Natural killer cell (primary cell): ENCODE measurements at regions of chr5 and their contacts with region 1.

Region 1: DNA sequence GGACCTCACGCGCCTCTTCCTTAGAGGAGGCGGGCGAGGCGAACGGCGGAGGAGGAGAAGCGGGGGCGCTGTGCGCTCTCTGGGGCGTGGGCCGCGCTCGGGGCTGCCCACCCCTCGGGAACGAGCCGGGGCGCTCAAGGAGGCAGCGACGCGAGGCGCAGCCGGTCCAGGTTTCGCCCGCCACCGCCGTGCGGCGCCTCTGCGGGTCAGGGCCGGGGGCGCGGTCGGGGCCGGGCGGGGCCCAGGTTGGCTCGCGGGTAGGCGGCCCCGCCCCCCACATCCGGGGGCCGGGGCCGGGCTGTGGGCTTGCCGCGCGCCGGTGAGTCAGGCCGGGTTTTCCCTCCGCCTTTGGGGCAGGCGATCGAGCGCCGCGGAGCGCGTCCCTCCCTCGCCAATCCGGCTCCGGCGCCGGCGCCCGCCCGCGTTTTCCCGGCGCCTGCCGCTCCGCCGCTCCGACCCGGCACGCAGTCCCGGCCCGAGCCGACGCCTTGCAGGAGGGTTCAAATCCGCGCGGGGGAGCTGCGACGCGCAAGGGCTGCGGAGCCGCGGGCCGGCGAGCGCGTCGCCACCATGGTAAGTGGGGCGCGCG is at the start of gene N4BP3:
- DNase-seq: peak; percentile 85 to 89
- ATAC-seq: peak; percentile 33 to 55 (median 49)
- H3K4me3 ChIP-seq: peak within 1 kb of the TSS; percentile 41
- H3K4me3 Mint-ChIP-seq: peak within 1 kb of the TSS; percentile 91
- H3K27ac ChIP-seq: peak within 1 kb of the TSS; percentile 60
- H3K27ac Mint-ChIP-seq: peak within 1 kb of the TSS; percentile 90 to 94
- H3K4me1 ChIP-seq: peaks cover 62% of the 10 kb centered on the region
- H3K4me1 Mint-ChIP-seq: peaks cover 29 to 38% of the 10 kb centered on the region in 2 donors
- H3K27me3 ChIP-seq: peaks cover 2% of the 10 kb centered on the region
- H3K27me3 Mint-ChIP-seq: peaks cover 8 to 24% of the 10 kb centered on the region in 2 donors
- CTCF ChIP-seq: no peak
- total RNA-seq, gene N4BP3: 5.6 to 16.9 (median 9.0) TPM

Region 2: DNA sequence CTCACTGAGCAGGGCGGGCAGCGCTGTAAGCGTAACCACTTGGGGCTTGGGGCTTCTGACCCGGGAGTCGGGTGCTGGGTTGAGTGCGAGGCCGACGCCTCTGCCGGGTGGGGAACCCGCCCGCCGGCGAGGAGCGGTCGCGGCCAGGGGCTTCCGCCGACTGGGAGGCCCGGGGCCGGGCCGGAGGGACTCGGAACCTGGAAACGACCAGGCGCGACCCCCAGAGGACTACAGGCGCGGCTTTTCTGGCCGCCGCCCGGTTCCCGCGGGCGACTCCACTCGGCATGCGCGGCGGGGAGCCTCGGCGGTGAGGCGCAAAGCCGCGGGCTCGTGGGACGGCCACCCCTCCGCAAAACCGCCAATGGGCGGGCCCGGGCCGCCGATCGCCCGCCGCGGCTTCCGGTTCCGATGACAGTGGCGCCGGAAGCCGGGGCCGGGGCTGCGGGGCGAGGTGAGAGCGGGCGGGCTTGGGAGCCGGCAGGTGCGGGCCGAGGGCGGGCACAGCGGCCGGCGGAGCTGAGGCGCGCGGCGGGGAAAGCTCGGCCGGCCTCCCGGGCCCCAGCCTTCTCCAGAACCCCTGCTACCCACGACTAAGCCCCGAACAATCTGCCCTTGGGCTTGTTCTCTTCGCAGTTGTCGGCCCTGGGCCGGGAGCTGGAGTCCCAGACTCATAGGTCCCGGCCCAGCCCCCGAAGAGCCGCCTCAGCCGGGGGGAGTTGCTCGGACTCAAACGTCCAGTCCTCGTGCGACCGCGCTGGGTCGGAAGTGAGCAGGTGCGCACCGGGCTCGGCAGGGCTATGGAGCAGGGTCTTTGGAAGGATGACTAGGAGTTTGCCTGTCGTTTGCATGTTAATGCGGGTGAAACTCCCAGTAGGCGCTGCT is 17.6 kb after region 1 on chr5 and contains the start of gene RMND5B:
- intact Hi-C with region 1: loop called (anchors 1 kb)
- DNase-seq: peak; percentile 80 to 87
- ATAC-seq: peak; percentile 83 to 84 (median 83)
- H3K4me3 ChIP-seq: peak within 1 kb of the TSS; percentile 72
- H3K4me3 Mint-ChIP-seq: peak within 1 kb of the TSS; percentile 72
- H3K27ac ChIP-seq: peak within 1 kb of the TSS; percentile 72
- H3K27ac Mint-ChIP-seq: peak within 1 kb of the TSS; percentile 13 to 18
- H3K4me1 ChIP-seq: peaks cover 21% of the 10 kb centered on the region
- H3K4me1 Mint-ChIP-seq: peaks cover 7 to 26% of the 10 kb centered on the region in 2 donors
- H3K27me3 ChIP-seq: no peaks in the 10 kb centered on the region
- H3K27me3 Mint-ChIP-seq: no peaks in the 10 kb centered on the region
- CTCF ChIP-seq: no peak
- total RNA-seq, gene RMND5B: 9.2 to 12.7 (median 9.5) TPM

Region 3: GRCh38 chr5:178153573-178154343 is 40.5 kb after region 1 on chr5 and contains the start of gene NHP2:
- intact Hi-C with region 1: loop called (anchors 2 kb)
- DNase-seq: peak; percentile 92 to 99
- ATAC-seq: peak; percentile 98 to 100 (median 99)
- H3K4me3 ChIP-seq: peak within 1 kb of the TSS; percentile 54
- H3K4me3 Mint-ChIP-seq: peak within 1 kb of the TSS; percentile 98
- H3K27ac ChIP-seq: peak within 1 kb of the TSS; percentile 11
- H3K27ac Mint-ChIP-seq: peak within 1 kb of the TSS; percentile 89 to 93
- H3K4me1 ChIP-seq: peaks cover 20% of the 10 kb centered on the region
- H3K4me1 Mint-ChIP-seq: peaks cover 19 to 23% of the 10 kb centered on the region in 2 donors
- H3K27me3 ChIP-seq: no peaks in the 10 kb centered on the region
- H3K27me3 Mint-ChIP-seq: no peaks in the 10 kb centered on the region
- CTCF ChIP-seq: no peak
- total RNA-seq, gene NHP2: 39.2 to 43.5 (median 40.2) TPM

Region 4: GRCh38 chr5:178232124-178232919 is 119.0 kb after region 1 on chr5 and contains the start of gene PHYKPL:
- intact Hi-C with region 1: loop called (anchors 10 kb)
- DNase-seq: peak; percentile 54 to 81
- ATAC-seq: peak; percentile 67 to 79 (median 70)
- H3K4me3 ChIP-seq: peak within 1 kb of the TSS; percentile 70
- H3K4me3 Mint-ChIP-seq: peak within 1 kb of the TSS; percentile 87
- H3K27ac ChIP-seq: peak within 1 kb of the TSS; percentile 75
- H3K27ac Mint-ChIP-seq: peak within 1 kb of the TSS; percentile 70 to 77
- H3K4me1 ChIP-seq: peaks cover 60% of the 10 kb centered on the region
- H3K4me1 Mint-ChIP-seq: peaks cover 67 to 68% of the 10 kb centered on the region in 2 donors
- H3K27me3 ChIP-seq: no peaks in the 10 kb centered on the region
- H3K27me3 Mint-ChIP-seq: no peaks in the 10 kb centered on the region
- CTCF ChIP-seq: no peak
- total RNA-seq, gene PHYKPL: 111 to 134 (median 131) TPM